B cell (primary cell): ENCODE measurements at regions of chr20 and their contacts with region 1.

Region 1: DNA sequence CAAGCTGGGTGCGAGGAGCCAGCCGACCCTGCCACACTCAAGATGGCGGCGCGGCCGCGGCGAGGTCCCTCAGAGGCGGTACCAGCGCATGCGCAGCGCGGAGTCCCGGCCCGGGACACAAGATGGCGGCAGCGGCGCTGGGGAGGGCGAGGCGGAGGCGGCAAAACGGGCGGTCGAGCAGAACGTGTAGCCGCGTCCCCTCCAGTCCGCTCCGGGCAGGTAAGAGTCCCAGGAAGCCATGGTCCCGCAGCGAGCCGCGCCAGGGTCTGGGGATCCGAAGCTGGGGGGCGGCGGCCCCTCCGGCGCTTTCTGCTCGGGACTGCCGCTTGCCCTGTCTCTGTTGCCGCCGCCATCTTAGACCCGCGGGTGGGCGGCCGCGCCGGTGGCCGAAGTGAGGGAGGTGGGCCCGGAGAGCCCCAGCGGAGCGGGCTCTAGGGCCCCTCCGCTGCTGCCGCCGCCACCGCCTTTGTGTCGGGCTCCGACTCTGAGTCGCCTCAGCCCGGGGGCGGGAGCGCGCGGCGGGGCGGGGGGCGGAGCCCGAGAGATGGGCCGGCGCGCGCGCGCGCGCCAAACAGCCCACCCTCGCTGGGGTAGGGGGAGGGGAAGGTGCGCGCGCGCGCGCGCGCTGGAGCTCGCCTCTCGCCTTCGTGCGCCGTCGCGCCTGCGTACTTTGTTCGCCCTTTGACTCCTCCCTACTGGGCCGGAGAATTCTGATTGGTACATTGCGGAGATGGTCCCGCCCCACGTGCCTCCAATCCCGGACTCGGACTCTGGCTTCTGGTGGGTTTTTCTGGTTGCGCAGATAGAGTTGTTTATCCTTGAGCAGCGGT is at the start of gene PCIF1:
- DNase-seq: peak; percentile 100
- ATAC-seq: peak; percentile 82
- H3K4me3 ChIP-seq: peak within 1 kb of the TSS; percentile 88 to 100 (median 93)
- H3K4me3 Mint-ChIP-seq: peak within 1 kb of the TSS; percentile 96
- H3K27ac ChIP-seq: peak within 1 kb of the TSS; percentile 99
- H3K27ac Mint-ChIP-seq: peak within 1 kb of the TSS; percentile 98
- H3K4me1 ChIP-seq: peaks cover 12 to 19% of the 10 kb centered on the region in 2 donors
- H3K4me1 Mint-ChIP-seq: peaks cover 28% of the 10 kb centered on the region
- H3K27me3 ChIP-seq: no peaks in the 10 kb centered on the region
- H3K27me3 Mint-ChIP-seq: no peaks in the 10 kb centered on the region
- CTCF ChIP-seq: no peak
- total RNA-seq, gene PCIF1: 78.9 and 79.2 TPM in 2 replicates

Region 2: GRCh38 chr20:45812157-45813020 is 122.4 kb before region 1 on chr20 and contains the start of gene UBE2C:
- CTCF ChIA-PET with region 1: no interaction called
- POLR2A ChIA-PET with region 1: no interaction called
- intact Hi-C with region 1: loop called (anchors 1 kb)
- DNase-seq: peak; percentile 96
- ATAC-seq: peak; percentile 100
- H3K4me3 ChIP-seq: peak within 1 kb of the TSS in 4 of 5 experiments; percentile 52 to 85 (median 65)
- H3K4me3 Mint-ChIP-seq: peak within 1 kb of the TSS; percentile 88
- H3K27ac ChIP-seq: no peak within 1 kb of the TSS
- H3K27ac Mint-ChIP-seq: peak within 1 kb of the TSS; percentile 70
- H3K4me1 ChIP-seq: peaks cover 9 to 16% of the 10 kb centered on the region in 2 donors
- H3K4me1 Mint-ChIP-seq: peaks cover 16% of the 10 kb centered on the region
- H3K27me3 ChIP-seq: peaks cover 0 to 2% (median 0%) of the 10 kb centered on the region in 4 experiments
- H3K27me3 Mint-ChIP-seq: no peaks in the 10 kb centered on the region
- CTCF ChIP-seq: no peak
- total RNA-seq, gene UBE2C: 0.54 TPM in 1 of 2 replicates, not detected in the other

Region 3: GRCh38 chr20:45910670-45911485 is 23.9 kb before region 1 on chr20:
- CTCF ChIA-PET with region 1: no interaction called
- POLR2A ChIA-PET with region 1: interaction called, 21 read pairs
- intact Hi-C with region 1: loop called (anchors 1 kb)
- DNase-seq: peak; percentile 95
- ATAC-seq: peak; percentile 93
- H3K4me3 ChIP-seq: peak overlapping the region in 4 of 5 experiments; percentile 37 to 65 (median 60)
- H3K4me3 Mint-ChIP-seq: peak overlapping the region; percentile 94
- H3K27ac ChIP-seq: no peak overlapping the region
- H3K27ac Mint-ChIP-seq: peak overlapping the region; percentile 28
- H3K4me1 ChIP-seq: peaks cover 14 to 22% of the 10 kb centered on the region in 2 donors
- H3K4me1 Mint-ChIP-seq: peaks cover 20% of the 10 kb centered on the region
- H3K27me3 ChIP-seq: peaks cover 0 to 19% (median 9%) of the 10 kb centered on the region in 4 experiments
- H3K27me3 Mint-ChIP-seq: peaks cover 7% of the 10 kb centered on the region
- CTCF ChIP-seq: no peak

Region 4: GRCh38 chr20:45963059-45964005 is 28.5 kb after region 1 on chr20:
- CTCF ChIA-PET with region 1: interaction called, 44 read pairs
- POLR2A ChIA-PET with region 1: interaction called, 62 read pairs
- intact Hi-C with region 1: no loop called
- DNase-seq: peak; percentile 56
- ATAC-seq: peak; percentile 11
- H3K4me3 ChIP-seq: no peak overlapping the region
- H3K4me3 Mint-ChIP-seq: no peak overlapping the region
- H3K27ac ChIP-seq: no peak overlapping the region
- H3K27ac Mint-ChIP-seq: peak overlapping the region; percentile 64
- H3K4me1 ChIP-seq: peaks cover 0 to 9% of the 10 kb centered on the region in 2 donors
- H3K4me1 Mint-ChIP-seq: peaks cover 10% of the 10 kb centered on the region
- H3K27me3 ChIP-seq: no peaks in the 10 kb centered on the region
- H3K27me3 Mint-ChIP-seq: no peaks in the 10 kb centered on the region
- CTCF ChIP-seq: no peak